B cell (primary cell): ENCODE measurements at regions of chr1 and their contacts with region 1.

Region 1: GRCh38 chr1:17125756-17126237 is 6.5 kb upstream of the PADI2 start:
- DNase-seq: peak; percentile 85
- ATAC-seq: peak; percentile 79
- H3K4me3 ChIP-seq: no peak overlapping the region
- H3K4me3 Mint-ChIP-seq: no peak overlapping the region
- H3K27ac ChIP-seq: no peak overlapping the region
- H3K27ac Mint-ChIP-seq: peak overlapping the region; percentile 37
- H3K4me1 ChIP-seq: peaks cover 4 to 13% of the 10 kb centered on the region in 2 donors
- H3K4me1 Mint-ChIP-seq: peaks cover 23% of the 10 kb centered on the region
- H3K27me3 ChIP-seq: peaks cover 0 to 8% (median 0%) of the 10 kb centered on the region in 4 experiments
- H3K27me3 Mint-ChIP-seq: peaks cover 3% of the 10 kb centered on the region
- CTCF ChIP-seq: peak; percentile 97

Region 2: GRCh38 chr1:17141441-17142197 is 15.8 kb after region 1 on chr1:
- CTCF ChIA-PET with region 1: interaction called, 69 read pairs
- POLR2A ChIA-PET with region 1: interaction called, 11 read pairs
- intact Hi-C with region 1: loop called (anchors 1 kb)
- DNase-seq: peak; percentile 73
- ATAC-seq: peak; percentile 77
- H3K4me3 ChIP-seq: no peak overlapping the region
- H3K4me3 Mint-ChIP-seq: peak overlapping the region; percentile 60
- H3K27ac ChIP-seq: peak overlapping the region in 1 of 2 donors; percentile 20
- H3K27ac Mint-ChIP-seq: peak overlapping the region; percentile 87
- H3K4me1 ChIP-seq: peaks cover 5 to 18% of the 10 kb centered on the region in 2 donors
- H3K4me1 Mint-ChIP-seq: peaks cover 24% of the 10 kb centered on the region
- H3K27me3 ChIP-seq: peaks cover 0 to 3% (median 0%) of the 10 kb centered on the region in 4 experiments
- H3K27me3 Mint-ChIP-seq: peaks cover 2% of the 10 kb centered on the region
- CTCF ChIP-seq: no peak

Region 3: GRCh38 chr1:17207966-17208418 is 82.2 kb after region 1 on chr1:
- CTCF ChIA-PET with region 1: interaction called, 27 read pairs
- POLR2A ChIA-PET with region 1: no interaction called
- intact Hi-C with region 1: no loop called
- DNase-seq: peak; percentile 67
- ATAC-seq: peak; percentile 80
- H3K4me3 ChIP-seq: no peak overlapping the region
- H3K4me3 Mint-ChIP-seq: peak overlapping the region; percentile 85
- H3K27ac ChIP-seq: no peak overlapping the region
- H3K27ac Mint-ChIP-seq: peak overlapping the region; percentile 60
- H3K4me1 ChIP-seq: peaks cover 22% of the 10 kb centered on the region in 2 donors
- H3K4me1 Mint-ChIP-seq: peaks cover 32% of the 10 kb centered on the region
- H3K27me3 ChIP-seq: peaks cover 0 to 7% (median 0%) of the 10 kb centered on the region in 4 experiments
- H3K27me3 Mint-ChIP-seq: peaks cover 6% of the 10 kb centered on the region
- CTCF ChIP-seq: no peak

Region 4: GRCh38 chr1:17244816-17245740 is 119.3 kb after region 1 on chr1:
- CTCF ChIA-PET with region 1: interaction called, 373 read pairs
- POLR2A ChIA-PET with region 1: no interaction called
- intact Hi-C with region 1: no loop called
- DNase-seq: no peak
- ATAC-seq: no peak
- H3K4me3 ChIP-seq: no peak overlapping the region
- H3K4me3 Mint-ChIP-seq: no peak overlapping the region
- H3K27ac ChIP-seq: no peak overlapping the region
- H3K27ac Mint-ChIP-seq: no peak overlapping the region
- H3K4me1 ChIP-seq: no peaks in the 10 kb centered on the region
- H3K4me1 Mint-ChIP-seq: no peaks in the 10 kb centered on the region
- H3K27me3 ChIP-seq: peaks cover 0 to 2% (median 0%) of the 10 kb centered on the region in 4 experiments
- H3K27me3 Mint-ChIP-seq: peaks cover 9% of the 10 kb centered on the region
- CTCF ChIP-seq: no peak

Region 5: DNA sequence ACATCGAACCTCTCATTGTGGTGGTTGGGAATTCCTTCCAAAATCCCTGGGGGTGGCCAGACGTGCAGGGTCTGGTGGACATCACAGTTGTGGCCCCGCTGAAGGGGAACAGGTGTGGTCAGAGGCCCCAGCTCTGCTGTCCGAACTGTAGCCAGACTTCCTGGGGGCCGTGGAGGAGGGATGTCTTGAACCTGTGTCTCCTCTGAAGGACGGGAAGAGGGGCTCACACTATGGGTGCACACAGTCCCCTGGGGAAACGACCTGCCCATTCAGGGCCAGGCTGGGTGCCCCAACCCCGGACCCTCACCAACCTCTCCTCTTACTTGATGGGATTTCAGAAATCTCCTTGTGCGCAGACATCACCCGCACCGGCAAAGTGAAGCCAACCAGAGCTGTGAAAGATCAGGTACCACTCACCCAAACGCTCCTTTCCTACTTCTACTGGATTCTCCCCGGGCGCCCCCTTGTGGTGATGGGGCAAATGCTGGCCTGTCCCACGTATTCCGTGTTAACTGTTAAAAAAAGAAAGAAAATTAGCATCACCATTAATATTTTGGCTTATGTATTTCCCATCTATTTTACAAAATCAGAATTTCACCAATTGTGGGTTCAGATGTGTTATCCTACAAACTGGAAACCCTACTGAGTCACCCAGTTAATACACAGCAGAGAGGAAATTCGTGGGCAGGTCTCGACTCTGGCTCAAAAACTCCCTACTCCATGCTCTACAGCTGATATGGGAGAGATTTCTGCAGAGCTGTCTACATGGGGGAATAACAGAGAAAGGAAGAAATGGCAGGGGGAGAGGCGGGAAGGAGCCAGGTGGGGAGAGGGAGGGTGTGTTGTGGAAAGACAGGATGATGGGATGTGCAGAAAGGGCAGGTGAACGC is 210.3 kb after region 1 on chr1:
- CTCF ChIA-PET with region 1: interaction called, 25 read pairs
- POLR2A ChIA-PET with region 1: no interaction called
- intact Hi-C with region 1: no loop called
- DNase-seq: peak; percentile 57
- ATAC-seq: peak; percentile 51
- H3K4me3 ChIP-seq: no peak overlapping the region
- H3K4me3 Mint-ChIP-seq: no peak overlapping the region
- H3K27ac ChIP-seq: no peak overlapping the region
- H3K27ac Mint-ChIP-seq: no peak overlapping the region
- H3K4me1 ChIP-seq: no peaks in the 10 kb centered on the region
- H3K4me1 Mint-ChIP-seq: no peaks in the 10 kb centered on the region
- H3K27me3 ChIP-seq: peaks cover 0 to 11% (median 0%) of the 10 kb centered on the region in 4 experiments
- H3K27me3 Mint-ChIP-seq: peaks cover 24% of the 10 kb centered on the region
- CTCF ChIP-seq: peak; percentile 93

Region 6: GRCh38 chr1:17405898-17406759 is 280.3 kb after region 1 on chr1:
- CTCF ChIA-PET with region 1: interaction called, 5 read pairs
- POLR2A ChIA-PET with region 1: no interaction called
- intact Hi-C with region 1: loop called (anchors 2 kb)
- DNase-seq: peak; percentile 57
- ATAC-seq: peak; percentile 88
- H3K4me3 ChIP-seq: no peak overlapping the region
- H3K4me3 Mint-ChIP-seq: no peak overlapping the region
- H3K27ac ChIP-seq: no peak overlapping the region
- H3K27ac Mint-ChIP-seq: no peak overlapping the region
- H3K4me1 ChIP-seq: no peaks in the 10 kb centered on the region
- H3K4me1 Mint-ChIP-seq: no peaks in the 10 kb centered on the region
- H3K27me3 ChIP-seq: no peaks in the 10 kb centered on the region
- H3K27me3 Mint-ChIP-seq: no peaks in the 10 kb centered on the region
- CTCF ChIP-seq: peak; percentile 73